Ascending aorta (tissue), 2 donors: ENCODE measurements at regions of chr6 and their contacts with region 1.

Region 1: DNA sequence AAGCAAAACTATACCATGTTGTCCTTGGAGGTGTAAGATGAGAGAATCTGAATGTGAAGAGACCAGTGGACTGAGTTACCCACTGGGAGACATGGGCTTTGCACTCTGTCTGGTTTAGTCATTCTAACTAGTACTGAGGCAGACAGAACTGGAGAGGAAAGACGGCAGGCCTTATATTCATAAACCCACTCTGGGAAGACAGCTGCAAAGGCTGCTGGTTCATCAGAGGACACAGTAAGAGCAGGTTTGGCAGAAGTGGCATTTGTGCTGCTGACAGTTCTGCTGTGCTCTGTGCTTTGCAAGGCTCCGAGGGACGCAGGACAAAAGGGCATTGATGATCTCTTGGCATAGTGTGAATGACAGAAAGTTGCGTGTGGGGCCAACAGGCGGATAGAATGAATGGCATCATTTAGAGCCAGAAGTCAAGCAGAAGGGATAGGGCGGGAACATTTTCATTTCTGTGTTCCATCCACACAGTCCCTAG is 142.3 kb upstream of the TENT5A start:
- DNase-seq: no peak
- H3K4me3 ChIP-seq: peak overlapping the region in 1 of 2 donors; percentile 24
- H3K27ac ChIP-seq: peak overlapping the region; percentile 12 to 22
- H3K4me1 ChIP-seq: peaks cover 0 to 15% of the 10 kb centered on the region in 2 donors
- H3K27me3 ChIP-seq: no peaks in the 10 kb centered on the region
- CTCF ChIP-seq: no peak

Region 2: GRCh38 chr6:81844686-81845085 is 50.1 kb before region 1 on chr6:
- intact Hi-C with region 1: loop called (anchors 5 kb)
- DNase-seq: no peak
- H3K4me3 ChIP-seq: no peak overlapping the region
- H3K27ac ChIP-seq: peak overlapping the region; percentile 53 to 70
- H3K4me1 ChIP-seq: peaks cover 7 to 18% of the 10 kb centered on the region in 2 donors
- H3K27me3 ChIP-seq: no peaks in the 10 kb centered on the region
- CTCF ChIP-seq: no peak

Region 3: GRCh38 chr6:81859884-81860283 is 34.9 kb before region 1 on chr6:
- intact Hi-C with region 1: loop called (anchors 2 kb)
- DNase-seq: peak in 1 of 2 donors; percentile 80
- H3K4me3 ChIP-seq: no peak overlapping the region
- H3K27ac ChIP-seq: peak overlapping the region; percentile 70 to 76
- H3K4me1 ChIP-seq: peaks cover 8 to 54% of the 10 kb centered on the region in 2 donors
- H3K27me3 ChIP-seq: no peaks in the 10 kb centered on the region
- CTCF ChIP-seq: no peak

Region 4: DNA sequence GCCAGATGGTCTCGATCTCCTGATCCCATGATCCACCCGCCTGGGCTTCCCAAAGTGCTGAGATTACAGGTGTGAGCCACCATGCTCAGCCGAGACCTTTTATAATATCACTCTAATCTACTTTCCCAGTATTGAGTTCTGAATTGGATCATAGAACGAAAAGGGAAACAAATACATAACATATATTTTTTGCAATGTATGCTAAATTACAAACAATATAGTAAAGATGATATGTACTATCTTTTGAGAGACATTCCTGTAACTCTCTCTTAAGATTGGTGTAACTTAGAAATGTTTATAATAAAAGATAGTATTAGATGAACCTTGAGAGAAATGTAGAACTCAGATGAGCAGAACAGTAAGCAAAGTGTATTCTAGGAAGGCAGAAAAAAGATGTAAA is 13.2 kb before region 1 on chr6:
- intact Hi-C with region 1: no loop called
- DNase-seq: no peak
- H3K4me3 ChIP-seq: no peak overlapping the region
- H3K27ac ChIP-seq: no peak overlapping the region
- H3K4me1 ChIP-seq: no peaks in the 10 kb centered on the region
- H3K27me3 ChIP-seq: no peaks in the 10 kb centered on the region
- CTCF ChIP-seq: no peak

Region 5: GRCh38 chr6:82040405-82041221 is 145.8 kb after region 1 on chr6:
- intact Hi-C with region 1: loop called (anchors 2 kb)
- DNase-seq: peak in 1 of 2 donors; percentile 73
- H3K4me3 ChIP-seq: no peak overlapping the region
- H3K27ac ChIP-seq: no peak overlapping the region
- H3K4me1 ChIP-seq: peaks cover 0 to 4% of the 10 kb centered on the region in 2 donors
- H3K27me3 ChIP-seq: no peaks in the 10 kb centered on the region
- CTCF ChIP-seq: peak; percentile 46 to 80 (median 74)